CD8-positive, alpha-beta T cell (primary cell): ENCODE measurements at regions of chr1 and their contacts with region 1.

Region 1: DNA sequence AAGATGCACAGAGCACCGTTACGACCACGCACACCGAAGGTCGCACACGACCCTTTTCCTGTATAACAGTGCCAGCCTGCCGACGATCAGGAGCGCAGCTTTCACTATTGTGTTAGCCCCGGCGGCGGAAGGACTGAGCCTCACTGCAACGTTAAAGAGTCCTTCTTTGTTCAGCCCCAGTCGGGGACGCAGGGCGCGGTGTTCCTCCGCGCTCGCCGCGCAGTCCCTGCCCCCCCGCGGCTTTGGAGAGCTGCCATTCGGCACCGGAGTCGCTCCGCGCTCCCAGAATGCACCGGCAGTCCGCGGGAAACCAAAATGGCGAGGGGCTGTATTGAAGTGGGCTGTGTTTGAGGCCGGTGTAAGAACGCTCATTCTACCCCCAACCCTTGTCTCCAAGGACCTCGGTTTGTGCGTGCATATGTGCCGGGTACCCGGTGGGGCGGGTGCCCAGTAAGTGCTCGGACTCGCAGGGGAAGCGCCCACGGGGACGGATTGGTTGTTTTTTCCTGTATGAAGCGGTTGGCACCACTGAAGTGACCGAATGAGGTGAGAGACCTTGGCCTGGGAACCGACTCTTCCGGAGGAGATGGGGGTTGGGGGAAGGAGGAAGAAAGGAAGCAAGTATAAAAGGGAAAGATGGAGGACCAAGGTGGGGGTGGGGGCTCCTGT is at the start of gene MTF2:
- DNase-seq: peak; percentile 85 to 96 (median 91)
- ATAC-seq: peak; percentile 86
- H3K4me3 ChIP-seq: peak within 1 kb of the TSS; percentile 91 to 92
- H3K4me3 Mint-ChIP-seq: peak within 1 kb of the TSS; percentile 97
- H3K27ac ChIP-seq: peak within 1 kb of the TSS; percentile 76 to 90
- H3K27ac Mint-ChIP-seq: peak within 1 kb of the TSS; percentile 96
- H3K4me1 ChIP-seq: peaks cover 39% of the 10 kb centered on the region
- H3K4me1 Mint-ChIP-seq: peaks cover 50% of the 10 kb centered on the region
- H3K27me3 ChIP-seq: no peaks in the 10 kb centered on the region
- H3K27me3 Mint-ChIP-seq: no peaks in the 10 kb centered on the region
- CTCF ChIP-seq: no peak
- total RNA-seq, gene MTF2: 41.4 to 43.3 TPM

Region 2: GRCh38 chr1:92960395-92961130 is 118.6 kb before region 1 on chr1:
- CTCF ChIA-PET with region 1: no interaction called
- POLR2A ChIA-PET with region 1: interaction called, 16 read pairs
- intact Hi-C with region 1: loop called in 1 of 2 experiments (anchors 2 kb)
- DNase-seq: peak; percentile 40 to 90 (median 62)
- ATAC-seq: peak; percentile 41
- H3K4me3 ChIP-seq: peak overlapping the region; percentile 81 to 82
- H3K4me3 Mint-ChIP-seq: peak overlapping the region; percentile 92
- H3K27ac ChIP-seq: peak overlapping the region; percentile 85 to 87
- H3K27ac Mint-ChIP-seq: peak overlapping the region; percentile 96
- H3K4me1 ChIP-seq: peaks cover 57% of the 10 kb centered on the region
- H3K4me1 Mint-ChIP-seq: peaks cover 40% of the 10 kb centered on the region
- H3K27me3 ChIP-seq: no peaks in the 10 kb centered on the region
- H3K27me3 Mint-ChIP-seq: no peaks in the 10 kb centered on the region
- CTCF ChIP-seq: peak; percentile 58

Region 3: DNA sequence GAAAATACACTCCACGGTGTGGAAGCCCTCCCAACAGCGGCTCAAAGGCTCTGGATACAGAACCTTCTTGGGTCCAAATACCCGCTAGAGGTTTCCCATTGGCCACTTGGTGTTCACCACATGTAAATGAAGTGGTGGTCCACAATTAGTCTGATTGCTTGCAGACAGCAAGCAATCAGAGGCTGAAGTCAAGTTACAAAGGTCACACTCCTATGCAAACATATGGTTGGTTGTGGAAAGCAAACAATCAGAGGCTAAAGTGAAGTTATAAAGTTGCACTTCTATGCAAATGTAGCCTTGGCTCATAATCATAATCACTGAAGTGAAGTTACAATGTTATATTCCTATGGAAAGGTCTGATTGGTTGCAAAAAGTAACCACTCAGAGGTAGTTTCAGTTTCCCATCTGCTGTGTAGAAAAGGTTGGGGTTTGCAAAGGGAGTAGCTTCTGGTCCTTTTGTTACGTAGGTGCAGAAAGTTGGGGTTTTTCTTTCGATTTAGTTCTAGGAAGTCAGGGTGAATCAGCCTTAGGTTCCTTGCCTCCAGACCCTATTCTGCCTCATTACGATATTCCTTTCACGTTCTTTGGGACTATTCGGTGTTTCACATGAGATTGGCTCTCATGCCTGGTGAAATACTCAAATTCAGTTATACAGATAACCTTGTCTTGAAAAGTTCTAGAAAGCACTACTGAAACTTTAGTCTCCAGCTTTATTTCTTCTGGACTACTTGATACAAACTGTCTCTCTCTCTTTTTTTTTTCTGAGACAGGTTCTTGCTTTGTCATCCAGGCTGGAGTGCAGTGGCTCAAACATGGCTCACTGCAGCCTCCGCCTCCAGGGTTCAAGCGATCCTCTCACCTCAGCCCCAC is 36.7 kb before region 1 on chr1:
- CTCF ChIA-PET with region 1: no interaction called
- POLR2A ChIA-PET with region 1: interaction called, 21 read pairs
- intact Hi-C with region 1: loop called (anchors 2 kb)
- DNase-seq: peak in 6 of 9 experiments; percentile 11 to 92 (median 20)
- ATAC-seq: peak; percentile 99
- H3K4me3 ChIP-seq: peak overlapping the region; percentile 32 to 44
- H3K4me3 Mint-ChIP-seq: peak overlapping the region; percentile 83
- H3K27ac ChIP-seq: peak overlapping the region; percentile 40 to 93
- H3K27ac Mint-ChIP-seq: peak overlapping the region; percentile 95
- H3K4me1 ChIP-seq: peaks cover 12% of the 10 kb centered on the region
- H3K4me1 Mint-ChIP-seq: peaks cover 13% of the 10 kb centered on the region
- H3K27me3 ChIP-seq: no peaks in the 10 kb centered on the region
- H3K27me3 Mint-ChIP-seq: no peaks in the 10 kb centered on the region
- CTCF ChIP-seq: no peak

Region 4: GRCh38 chr1:93114391-93114790 is 35.3 kb after region 1 on chr1:
- CTCF ChIA-PET with region 1: no interaction called
- POLR2A ChIA-PET with region 1: no interaction called
- intact Hi-C with region 1: loop called in 1 of 2 experiments (anchors 5 kb)
- DNase-seq: no peak
- ATAC-seq: no peak
- H3K4me3 ChIP-seq: no peak overlapping the region
- H3K4me3 Mint-ChIP-seq: no peak overlapping the region
- H3K27ac ChIP-seq: no peak overlapping the region
- H3K27ac Mint-ChIP-seq: no peak overlapping the region
- H3K4me1 ChIP-seq: no peaks in the 10 kb centered on the region
- H3K4me1 Mint-ChIP-seq: peaks cover 16% of the 10 kb centered on the region
- H3K27me3 ChIP-seq: no peaks in the 10 kb centered on the region
- H3K27me3 Mint-ChIP-seq: no peaks in the 10 kb centered on the region
- CTCF ChIP-seq: no peak

Region 5: DNA sequence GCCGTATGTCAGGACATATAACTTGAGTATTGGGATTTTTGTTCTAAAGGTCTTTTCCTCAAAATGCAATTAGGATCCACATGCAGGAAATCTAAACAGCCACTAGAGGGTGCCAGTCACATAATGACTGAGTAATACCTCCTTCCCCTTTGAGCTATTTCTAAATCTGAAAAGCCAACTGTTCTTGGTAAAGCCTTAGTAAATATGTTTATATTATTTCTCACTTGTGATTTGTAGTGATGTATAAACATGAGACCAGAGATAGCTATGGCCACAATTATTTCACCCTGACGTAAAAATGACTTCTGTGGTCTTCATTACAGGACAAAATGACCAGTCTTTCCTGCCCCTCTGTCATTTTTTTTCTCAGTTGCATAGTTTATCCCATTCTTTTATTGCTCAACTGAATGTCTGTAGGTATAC is 225.6 kb after region 1 on chr1:
- CTCF ChIA-PET with region 1: interaction called, 10 read pairs
- POLR2A ChIA-PET with region 1: interaction called, 4 read pairs
- intact Hi-C with region 1: loop called (anchors 2 kb)
- DNase-seq: peak in 7 of 9 experiments; percentile 15 to 77 (median 53)
- ATAC-seq: peak; percentile 71
- H3K4me3 ChIP-seq: no peak overlapping the region
- H3K4me3 Mint-ChIP-seq: no peak overlapping the region
- H3K27ac ChIP-seq: no peak overlapping the region
- H3K27ac Mint-ChIP-seq: no peak overlapping the region
- H3K4me1 ChIP-seq: no peaks in the 10 kb centered on the region
- H3K4me1 Mint-ChIP-seq: no peaks in the 10 kb centered on the region
- H3K27me3 ChIP-seq: no peaks in the 10 kb centered on the region
- H3K27me3 Mint-ChIP-seq: no peaks in the 10 kb centered on the region
- CTCF ChIP-seq: peak; percentile 95

Region 6: DNA sequence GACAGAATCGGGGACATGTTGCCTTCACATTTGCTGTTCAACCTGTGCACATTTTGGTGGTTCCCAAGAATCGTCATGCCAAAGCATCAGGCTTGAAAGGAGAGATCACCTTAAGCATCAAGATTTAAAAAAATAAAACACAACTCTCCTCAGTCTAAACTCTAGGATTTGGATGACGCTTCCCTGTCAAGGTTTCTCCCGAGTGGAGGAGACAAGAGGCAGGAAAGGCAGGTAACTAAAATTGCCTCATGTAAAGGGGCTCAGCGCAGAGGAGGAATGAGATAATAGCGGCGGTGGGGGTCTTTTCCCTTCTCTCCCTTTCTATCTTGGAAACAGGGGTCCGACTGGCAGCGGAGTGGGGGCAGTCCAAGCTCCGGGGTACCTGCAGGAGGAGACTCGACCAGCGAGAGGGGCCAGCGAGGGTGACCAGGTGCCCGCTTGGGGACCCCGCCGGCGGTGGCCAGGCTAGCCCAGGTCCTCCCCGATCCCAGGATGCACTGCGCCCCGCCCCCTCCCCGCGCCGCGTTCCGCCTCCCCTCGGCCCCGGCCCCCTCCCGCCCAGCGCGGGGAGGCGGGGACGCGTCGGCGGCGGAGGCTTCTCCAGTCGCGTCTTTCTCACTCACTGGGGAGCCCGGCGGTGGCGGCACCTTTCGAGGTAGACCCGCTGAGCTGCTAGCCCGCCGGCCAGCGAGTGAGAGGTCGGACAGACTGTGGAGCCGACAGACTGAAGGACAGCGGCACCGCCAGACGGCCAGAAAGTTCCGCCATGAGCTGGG is 368.6 kb after region 1 on chr1 and contains the start of gene FNBP1L:
- CTCF ChIA-PET with region 1: no interaction called
- POLR2A ChIA-PET with region 1: no interaction called
- intact Hi-C with region 1: loop called in 1 of 2 experiments (anchors 10 kb)
- DNase-seq: peak in 8 of 9 experiments; percentile 34 to 69 (median 51)
- ATAC-seq: peak; percentile 74
- H3K4me3 ChIP-seq: peak within 1 kb of the TSS; percentile 53 to 66
- H3K4me3 Mint-ChIP-seq: peak within 1 kb of the TSS; percentile 91
- H3K27ac ChIP-seq: no peak within 1 kb of the TSS
- H3K27ac Mint-ChIP-seq: no peak within 1 kb of the TSS
- H3K4me1 ChIP-seq: peaks cover 20% of the 10 kb centered on the region
- H3K4me1 Mint-ChIP-seq: peaks cover 17% of the 10 kb centered on the region
- H3K27me3 ChIP-seq: peaks cover 18 to 28% of the 10 kb centered on the region in 2 experiments
- H3K27me3 Mint-ChIP-seq: peaks cover 47% of the 10 kb centered on the region
- CTCF ChIP-seq: no peak
- total RNA-seq, gene FNBP1L: 0.31 to 0.35 TPM

Region 7: DNA sequence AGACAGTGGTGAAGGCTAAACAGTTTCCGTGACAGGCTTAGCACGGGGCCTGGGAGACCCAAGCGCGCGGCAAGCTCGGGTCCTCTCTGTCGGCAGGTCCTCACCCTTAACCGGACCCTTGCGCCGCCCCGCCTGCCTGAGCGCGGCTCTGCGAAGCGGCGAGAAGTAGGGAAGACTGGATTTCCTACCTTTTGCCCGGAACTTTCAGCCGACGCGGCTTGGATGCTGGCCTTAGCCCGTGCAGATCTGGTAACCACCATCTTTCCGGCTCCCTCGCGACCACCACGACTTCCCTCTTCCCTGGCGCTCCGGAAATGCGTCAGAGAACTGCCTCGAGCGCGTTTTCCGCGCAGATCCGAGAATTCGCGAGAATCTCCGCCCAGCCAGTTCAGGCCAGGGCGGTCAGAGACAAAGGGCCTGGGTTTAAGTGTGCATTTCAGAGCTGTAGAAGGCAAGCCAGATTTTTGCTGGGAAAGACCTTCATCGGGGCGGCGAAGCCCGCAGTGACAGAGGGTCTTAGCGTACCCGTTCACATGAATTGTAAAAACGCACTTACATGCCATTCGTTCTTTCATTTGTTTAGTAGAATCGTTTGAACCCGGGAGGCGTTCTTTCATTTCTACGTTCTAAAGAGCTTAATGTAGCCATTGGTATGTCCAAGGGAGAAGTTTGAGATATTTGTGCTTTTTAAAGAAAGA is 799.9 kb after region 1 on chr1 and contains the start of gene DNTTIP2:
- CTCF ChIA-PET with region 1: no interaction called
- POLR2A ChIA-PET with region 1: interaction called, 3 read pairs
- intact Hi-C with region 1: loop called in 1 of 2 experiments (anchors 10 kb)
- DNase-seq: peak; percentile 74 to 95 (median 88)
- ATAC-seq: peak; percentile 81
- H3K4me3 ChIP-seq: peak within 1 kb of the TSS; percentile 87 to 99
- H3K4me3 Mint-ChIP-seq: peak within 1 kb of the TSS; percentile 95
- H3K27ac ChIP-seq: peak within 1 kb of the TSS; percentile 95 to 99
- H3K27ac Mint-ChIP-seq: peak within 1 kb of the TSS; percentile 98
- H3K4me1 ChIP-seq: peaks cover 32% of the 10 kb centered on the region
- H3K4me1 Mint-ChIP-seq: peaks cover 46% of the 10 kb centered on the region
- H3K27me3 ChIP-seq: no peaks in the 10 kb centered on the region
- H3K27me3 Mint-ChIP-seq: no peaks in the 10 kb centered on the region
- CTCF ChIP-seq: no peak
- total RNA-seq, gene DNTTIP2: 126 to 130 TPM